PC-9 (cell line): ENCODE measurements at regions of chr7 and their contacts with region 1.

Region 1: DNA sequence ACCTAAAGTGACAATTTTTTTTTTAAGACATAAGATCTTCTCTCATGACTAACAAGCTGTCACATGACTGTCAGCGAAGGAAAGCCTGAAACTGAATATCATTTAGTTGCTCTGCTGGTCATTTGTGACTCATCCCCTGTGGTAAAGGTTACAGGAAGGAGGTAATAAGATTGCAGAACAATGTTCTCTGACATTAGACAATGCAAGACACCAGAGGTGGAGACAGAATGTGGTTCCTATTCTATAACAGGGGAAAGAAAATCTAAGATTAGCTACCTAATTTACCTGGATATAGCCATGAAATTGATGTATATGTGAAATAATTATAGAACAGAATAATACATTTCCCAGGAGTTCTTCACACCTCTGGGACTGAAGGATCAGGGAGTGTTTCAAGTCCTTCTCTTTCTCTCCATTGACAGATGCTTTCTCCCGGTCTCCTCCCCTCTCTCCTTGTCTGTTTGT is 47.7 kb downstream of the LRGUK start:
- DNase-seq: peak; percentile 46 to 96
- H3K4me3 ChIP-seq: no peak overlapping the region
- H3K27ac ChIP-seq: peak overlapping the region; percentile 66
- H3K4me1 ChIP-seq: peaks cover 16% of the 10 kb centered on the region
- H3K27me3 ChIP-seq: no peaks in the 10 kb centered on the region
- CTCF ChIP-seq: no peak

Region 2: DNA sequence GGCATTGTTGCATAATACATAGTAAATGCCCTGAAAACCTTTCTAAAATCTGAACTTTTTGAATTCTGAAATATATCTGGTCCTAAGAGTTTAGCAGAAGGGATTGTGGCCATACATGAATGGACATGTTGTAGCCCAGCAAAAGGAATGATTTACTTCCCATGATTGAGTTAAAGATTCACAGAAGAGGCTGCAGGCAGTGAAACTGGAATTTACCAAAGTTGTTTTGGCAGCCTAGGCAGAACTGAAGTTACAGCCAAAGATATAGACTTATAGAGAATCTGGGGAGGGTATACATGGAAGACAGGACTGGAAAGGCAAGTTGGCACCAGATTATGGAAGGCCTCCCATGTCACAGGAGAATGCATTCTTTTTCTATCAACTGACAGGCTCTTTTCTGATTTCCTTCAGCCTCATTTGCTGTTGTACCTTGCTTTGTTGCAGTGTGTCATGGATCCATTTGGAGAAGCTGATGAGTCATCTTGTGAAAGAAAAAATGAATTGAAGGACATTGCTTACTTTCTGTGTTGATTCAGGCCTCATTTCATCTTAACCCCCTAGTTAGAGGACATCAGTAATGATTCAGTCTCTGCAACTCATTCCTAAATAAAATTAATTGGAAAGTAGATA is 403.9 kb before region 1 on chr7:
- CTCF ChIA-PET with region 1: no interaction called
- POLR2A ChIA-PET with region 1: no interaction called
- intact Hi-C with region 1: no loop called
- DNase-seq: no peak
- H3K4me3 ChIP-seq: no peak overlapping the region
- H3K27ac ChIP-seq: no peak overlapping the region
- H3K4me1 ChIP-seq: no peaks in the 10 kb centered on the region
- H3K27me3 ChIP-seq: no peaks in the 10 kb centered on the region
- CTCF ChIP-seq: no peak

Region 3: GRCh38 chr7:134084488-134085144 is 90.2 kb before region 1 on chr7:
- CTCF ChIA-PET with region 1: no interaction called
- POLR2A ChIA-PET with region 1: no interaction called
- intact Hi-C with region 1: no loop called
- DNase-seq: no peak
- H3K4me3 ChIP-seq: no peak overlapping the region
- H3K27ac ChIP-seq: no peak overlapping the region
- H3K4me1 ChIP-seq: no peaks in the 10 kb centered on the region
- H3K27me3 ChIP-seq: no peaks in the 10 kb centered on the region
- CTCF ChIP-seq: no peak

Region 4: GRCh38 chr7:134126966-134127848 is 47.6 kb before region 1 on chr7 and contains the start of gene LRGUK:
- CTCF ChIA-PET with region 1: no interaction called
- POLR2A ChIA-PET with region 1: interaction called, 10 read pairs
- intact Hi-C with region 1: no loop called
- DNase-seq: peak; percentile 65 to 71
- H3K4me3 ChIP-seq: peak within 1 kb of the TSS; percentile 71
- H3K27ac ChIP-seq: no peak within 1 kb of the TSS
- H3K4me1 ChIP-seq: peaks cover 10% of the 10 kb centered on the region; the same call in 1 of the 2 replicates
- H3K27me3 ChIP-seq: 0 out of 2 replicates have a peak, but pooled peaks cover 8% of the 10 kb centered on the region
- CTCF ChIP-seq: no peak
- total RNA-seq, gene LRGUK: 0.60 and 2.3 TPM in 2 replicates